ENCODE measurements at regions of chrX and their contacts with region 1.

Region 1: DNA sequence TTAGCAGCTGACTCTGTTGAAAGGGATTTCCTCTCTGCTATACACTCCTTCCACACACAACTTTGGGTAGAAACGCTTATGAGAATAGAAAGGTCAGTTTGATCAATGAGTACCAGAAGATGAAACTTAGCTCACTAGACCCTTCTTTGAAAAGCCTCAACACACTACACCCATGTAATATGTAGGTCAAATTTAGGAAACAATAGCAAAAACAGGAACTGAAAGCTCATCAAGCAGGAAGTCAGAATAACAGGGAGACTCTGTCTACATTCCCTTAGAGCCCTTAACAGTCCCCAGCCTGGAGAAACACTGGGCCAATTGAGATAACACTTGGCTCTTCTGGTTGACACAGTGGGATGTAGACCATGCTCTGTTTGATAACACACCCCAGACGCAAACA is 30.7 kb downstream of the SRPX2 start:
- DNase-seq: no peak
- H3K4me3 ChIP-seq: no peak overlapping the region
- CTCF ChIP-seq: no peak

Region 2: GRCh38 chrX:100447654-100448397 is 226.9 kb before region 1 on chrX:
- CTCF ChIA-PET with region 1: no interaction called
- POLR2A ChIA-PET with region 1: no interaction called
- DNase-seq: no peak
- H3K4me3 ChIP-seq: no peak overlapping the region
- CTCF ChIP-seq: peak; percentile 53

Region 3: DNA sequence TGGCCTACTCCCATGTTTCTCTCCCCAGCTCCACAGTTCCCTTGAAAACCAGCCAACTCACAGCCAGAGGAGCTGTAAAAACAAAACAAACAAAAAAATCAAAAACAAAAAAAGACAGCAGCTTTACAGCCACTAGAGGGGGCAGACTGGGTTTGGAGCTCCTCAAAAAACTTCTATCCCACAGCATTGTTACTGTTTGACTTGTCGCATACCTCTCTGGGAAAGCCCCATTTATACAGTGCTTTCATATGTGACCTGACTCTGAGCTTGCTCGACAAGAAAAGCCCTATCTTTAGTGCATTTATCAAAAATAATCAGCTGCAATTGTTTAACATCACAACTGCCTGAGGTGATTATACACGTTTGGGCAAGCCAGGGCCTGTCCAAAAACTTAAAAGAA is 59.7 kb before region 1 on chrX:
- CTCF ChIA-PET with region 1: interaction called, 12 read pairs
- POLR2A ChIA-PET with region 1: no interaction called
- DNase-seq: no peak
- H3K4me3 ChIP-seq: no peak overlapping the region
- CTCF ChIP-seq: peak; percentile 52

Region 4: DNA sequence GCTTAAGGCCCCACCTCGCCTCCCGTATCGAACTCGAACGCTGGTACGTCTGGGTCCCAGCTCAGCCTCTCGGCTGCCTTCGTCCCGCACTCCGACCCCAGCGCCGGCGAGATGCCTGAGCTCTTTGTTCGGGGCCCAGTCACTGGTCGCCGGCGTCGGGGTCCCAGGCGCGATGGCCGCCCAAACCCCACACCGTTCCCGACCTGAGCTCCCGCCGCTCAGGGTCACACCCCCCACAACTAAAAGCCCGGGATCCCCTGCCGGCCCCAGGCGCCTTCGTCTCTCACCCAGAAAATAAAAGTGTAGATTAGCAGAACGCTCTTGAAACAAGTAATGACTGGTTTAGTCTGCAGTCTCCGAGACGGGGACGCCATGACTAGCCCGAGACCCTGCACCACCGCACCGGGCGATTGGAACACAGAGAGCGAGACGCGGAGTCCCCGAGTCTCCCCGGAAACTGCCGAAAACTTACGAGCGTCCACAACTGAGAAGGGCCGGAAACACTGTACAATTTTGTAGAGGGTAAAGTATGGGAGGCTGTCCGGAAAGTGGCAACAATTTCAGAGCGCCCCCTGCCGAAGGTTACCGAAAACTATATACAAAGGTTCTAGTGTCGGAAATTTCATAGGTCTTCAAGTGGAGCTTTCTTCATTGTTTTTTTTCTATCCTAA is 38.2 kb before region 1 on chrX and contains the start of gene TSPAN6:
- CTCF ChIA-PET with region 1: interaction called, 11 read pairs
- POLR2A ChIA-PET with region 1: no interaction called
- DNase-seq: no peak
- H3K4me3 ChIP-seq: peak within 1 kb of the TSS; percentile 66
- CTCF ChIP-seq: peak; percentile 33

Region 5: GRCh38 chrX:100649550-100650356 is 25.0 kb before region 1 on chrX:
- CTCF ChIA-PET with region 1: interaction called, 24 read pairs
- POLR2A ChIA-PET with region 1: interaction called, 4 read pairs
- DNase-seq: peak; percentile 72
- H3K4me3 ChIP-seq: no peak overlapping the region
- CTCF ChIP-seq: no peak

Region 6: GRCh38 chrX:100659431-100660137 is 15.1 kb before region 1 on chrX:
- CTCF ChIA-PET with region 1: interaction called, 24 read pairs
- POLR2A ChIA-PET with region 1: no interaction called
- DNase-seq: no peak
- H3K4me3 ChIP-seq: no peak overlapping the region
- CTCF ChIP-seq: no peak

Region 7: GRCh38 chrX:100685284-100685996 is 10.7 kb after region 1 on chrX:
- CTCF ChIA-PET with region 1: interaction called, 81 read pairs
- POLR2A ChIA-PET with region 1: no interaction called
- DNase-seq: peak; percentile 19
- H3K4me3 ChIP-seq: no peak overlapping the region
- CTCF ChIP-seq: peak; percentile 57

Measured in AG04449 (cell line).